ENCODE measurements at regions of chr1 and their contacts with region 1.

Region 1: DNA sequence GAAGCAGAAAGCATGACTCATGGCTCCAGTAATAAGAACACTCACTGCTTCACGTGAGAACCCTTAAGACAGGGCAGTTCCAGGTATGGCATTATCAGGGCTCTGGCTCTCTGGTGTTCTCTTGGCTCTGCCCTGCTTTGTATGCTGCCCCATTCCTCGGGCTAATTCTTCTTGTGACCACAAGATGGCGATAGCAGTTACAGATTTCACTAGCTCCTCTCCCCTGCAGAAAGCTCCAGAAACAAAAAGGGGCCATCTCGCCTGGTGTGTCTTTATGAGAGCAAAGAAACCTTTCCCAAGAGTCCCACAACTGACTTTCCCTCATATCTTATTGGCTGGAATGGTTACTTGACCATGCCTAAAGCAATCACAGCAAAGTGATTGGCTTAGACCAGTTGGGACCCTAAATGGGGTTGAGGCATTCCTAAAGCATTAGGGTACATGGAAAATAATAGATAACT is 60.1 kb downstream of the F3 start:
- DNase-seq: peak; percentile 23
- H3K4me3 ChIP-seq: no peak overlapping the region
- CTCF ChIP-seq: peak; percentile 69

Region 2: DNA sequence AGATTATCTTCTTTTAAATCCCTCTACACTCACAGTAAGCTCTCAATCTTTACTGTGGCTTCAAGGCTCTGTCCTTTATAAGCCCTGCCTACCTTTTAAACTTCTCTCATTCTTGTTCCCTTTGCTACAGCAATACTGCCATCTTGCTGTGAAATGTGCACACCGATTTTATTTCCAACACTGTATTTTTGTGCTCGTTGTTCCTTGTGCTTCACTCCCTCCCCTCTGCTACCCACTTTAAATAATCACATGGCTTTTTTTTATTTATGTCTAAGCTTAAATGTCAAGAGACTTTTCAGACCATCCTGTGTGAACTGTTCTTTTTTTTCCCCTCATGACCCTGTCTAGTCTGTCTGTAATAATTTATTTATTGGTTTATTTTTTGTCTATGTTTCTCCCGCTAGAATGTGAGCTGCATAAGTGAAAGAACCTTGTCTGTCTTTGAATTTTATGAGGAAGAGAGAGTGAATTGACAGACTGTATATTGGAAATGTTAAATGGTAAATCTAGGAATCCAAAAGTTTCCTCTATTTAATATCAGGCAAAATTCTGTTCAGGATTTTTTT is 17.7 kb before region 1 on chr1:
- CTCF ChIA-PET with region 1: interaction called, 76 read pairs
- POLR2A ChIA-PET with region 1: no interaction called
- DNase-seq: no peak
- H3K4me3 ChIP-seq: no peak overlapping the region
- CTCF ChIP-seq: peak; percentile 45

Region 3: DNA sequence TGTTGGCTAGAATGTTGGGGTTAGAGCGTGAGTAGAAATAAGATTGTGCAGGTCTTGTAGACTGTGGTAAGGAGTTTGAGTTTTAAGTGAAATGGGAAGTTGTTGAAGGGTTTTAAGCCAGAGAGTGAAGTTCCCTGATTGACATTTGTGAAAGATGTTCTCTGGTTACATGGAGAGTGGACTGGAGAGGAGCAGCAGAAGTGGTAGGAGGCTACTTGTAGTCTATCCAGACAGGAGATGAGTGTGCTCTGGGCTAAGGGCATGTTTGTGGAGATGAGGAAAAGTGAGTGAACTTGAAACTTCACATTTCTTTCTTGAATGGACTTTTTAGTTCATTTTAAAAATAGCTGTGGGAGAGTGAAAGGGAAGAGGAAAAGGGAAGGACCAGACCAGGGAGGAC is 23.1 kb after region 1 on chr1:
- CTCF ChIA-PET with region 1: interaction called, 61 read pairs
- POLR2A ChIA-PET with region 1: no interaction called
- DNase-seq: no peak
- H3K4me3 ChIP-seq: no peak overlapping the region
- CTCF ChIP-seq: no peak

Region 4: DNA sequence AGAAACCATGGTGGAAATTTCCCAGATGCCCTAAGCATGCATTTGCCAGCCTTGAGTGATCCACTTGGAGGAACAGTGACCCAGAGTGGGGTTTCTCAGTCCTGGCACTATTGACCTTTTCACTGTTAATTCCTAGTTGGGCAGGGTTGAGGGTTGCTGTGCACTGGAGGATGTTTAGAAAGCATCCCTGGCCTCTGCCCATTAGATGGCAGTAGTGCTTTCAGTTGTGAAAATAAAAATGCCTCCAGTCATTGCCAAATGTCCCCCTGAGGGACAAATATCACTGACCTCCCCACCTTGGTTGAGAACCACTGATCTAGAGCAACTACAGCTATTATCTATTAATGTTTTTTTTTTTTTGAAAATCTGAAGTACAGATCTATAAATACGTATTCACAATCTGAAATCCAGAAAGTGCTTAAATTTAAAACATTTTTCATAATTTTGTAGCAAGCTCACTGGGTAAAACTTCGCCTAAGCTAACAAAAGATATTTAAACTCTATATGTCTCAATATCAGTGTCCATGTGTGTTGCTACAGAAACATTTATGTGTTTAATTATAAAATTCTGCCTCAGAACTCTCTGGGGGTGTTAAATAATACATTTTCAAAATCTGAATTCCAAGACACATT is 32.7 kb after region 1 on chr1:
- CTCF ChIA-PET with region 1: interaction called, 33 read pairs
- POLR2A ChIA-PET with region 1: no interaction called
- DNase-seq: no peak
- H3K4me3 ChIP-seq: no peak overlapping the region
- CTCF ChIP-seq: peak; percentile 60

Region 5: DNA sequence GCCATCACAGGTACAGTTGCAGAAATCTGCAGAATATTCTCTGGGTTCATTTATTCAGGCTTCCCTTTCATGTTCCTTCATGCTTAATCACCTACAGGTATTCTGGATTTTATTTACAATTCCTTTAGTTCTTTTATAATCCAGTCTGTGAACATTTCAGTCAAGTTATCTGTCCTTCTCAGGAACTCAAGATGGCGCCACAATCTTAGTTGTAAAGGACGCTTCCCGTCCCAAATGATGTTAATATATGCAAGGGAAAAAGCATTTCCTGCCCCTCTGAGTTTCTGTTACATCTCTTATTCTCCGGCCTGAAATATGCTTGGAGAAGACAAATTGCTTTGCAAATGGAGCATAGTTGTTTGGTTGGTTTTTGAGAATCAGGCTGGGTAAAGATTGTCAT is 40.8 kb after region 1 on chr1:
- CTCF ChIA-PET with region 1: interaction called, 33 read pairs
- POLR2A ChIA-PET with region 1: no interaction called
- DNase-seq: no peak
- H3K4me3 ChIP-seq: no peak overlapping the region
- CTCF ChIP-seq: peak; percentile 56

Region 6: GRCh38 chr1:94553323-94553730 is 71.8 kb after region 1 on chr1:
- CTCF ChIA-PET with region 1: no interaction called
- POLR2A ChIA-PET with region 1: no interaction called
- DNase-seq: no peak
- H3K4me3 ChIP-seq: no peak overlapping the region
- CTCF ChIP-seq: no peak

Region 7: GRCh38 chr1:94819238-94819940 is 337.9 kb after region 1 on chr1:
- CTCF ChIA-PET with region 1: interaction called, 10 read pairs
- POLR2A ChIA-PET with region 1: no interaction called
- DNase-seq: no peak
- H3K4me3 ChIP-seq: peak overlapping the region; percentile 61
- CTCF ChIP-seq: no peak